HepG2 (cell line): ENCODE measurements at regions of chr18 and their contacts with region 1.

Region 1: DNA sequence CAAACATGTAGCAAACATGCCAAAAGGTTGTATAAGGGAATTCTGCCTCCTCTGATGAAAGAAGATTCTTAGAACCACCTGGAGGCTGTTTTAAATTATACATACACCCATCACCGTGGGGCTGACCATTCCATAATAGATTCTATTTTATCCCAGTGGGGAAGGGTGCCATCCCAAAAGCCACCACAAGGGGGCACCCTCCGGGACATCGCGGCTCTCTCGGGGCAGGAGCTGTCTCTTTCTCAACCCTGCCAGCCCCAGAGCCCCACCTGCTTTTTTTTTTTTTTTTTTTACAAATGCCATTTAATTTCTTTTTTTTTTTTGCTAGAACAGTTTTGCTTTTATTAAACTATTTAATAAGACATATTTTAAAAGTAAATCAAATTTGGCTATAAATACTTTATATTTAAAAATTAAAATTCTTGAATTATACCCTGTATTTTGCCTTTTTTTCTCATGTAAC is 8.6 kb upstream of the MTCL1 start:
- DNase-seq: peak; percentile 24
- ATAC-seq: peak; percentile 81
- H3K4me3 ChIP-seq: no peak overlapping the region
- H3K27ac ChIP-seq: no peak overlapping the region
- H3K4me1 ChIP-seq: peaks cover 5% of the 10 kb centered on the region; the same call in 1 of the 2 replicates
- H3K27me3 ChIP-seq: peaks cover 0 to 7% of the 10 kb centered on the region in 2 experiments; a peak in 2 of 5 replicates
- CTCF ChIP-seq: peak; percentile 73
- EP300 ChIP-seq: no peak
- POLR2A ChIP-seq: no peak
- RAD21 ChIP-seq: peak; percentile 45; the same call in 1 of the 2 replicates

Region 2: DNA sequence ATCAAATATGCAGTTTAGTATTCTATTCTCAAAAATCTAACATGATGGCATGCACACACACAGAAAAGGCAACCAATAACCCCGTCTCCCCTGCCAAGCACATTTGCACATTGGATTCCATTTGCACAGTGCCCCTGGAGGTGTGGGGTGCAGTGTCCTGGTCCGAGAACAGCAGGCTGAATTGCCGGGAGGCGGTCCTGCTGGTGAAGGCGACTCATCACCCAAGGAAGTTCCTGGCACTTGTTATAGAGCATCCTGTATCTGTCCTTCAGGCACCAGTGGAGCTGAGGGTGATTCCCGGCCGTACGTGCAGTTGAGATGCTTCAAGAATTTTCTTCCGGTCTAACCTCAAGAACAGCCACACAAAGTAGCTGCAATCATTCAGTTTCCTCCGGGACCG is 160.6 kb before region 1 on chr18:
- CTCF ChIA-PET with region 1: no interaction called
- POLR2A ChIA-PET with region 1: no interaction called
- in situ Hi-C with region 1: no loop called
- intact Hi-C with region 1: no loop called
- DNase-seq: no peak
- ATAC-seq: peak; percentile 36; the same call in 1 of the 3 replicates
- H3K4me3 ChIP-seq: no peak overlapping the region
- H3K27ac ChIP-seq: no peak overlapping the region
- H3K4me1 ChIP-seq: no peaks in the 10 kb centered on the region
- H3K27me3 ChIP-seq: no peaks in the 10 kb centered on the region; a peak in 1 of 5 replicates
- CTCF ChIP-seq: no peak
- EP300 ChIP-seq: no peak
- POLR2A ChIP-seq: no peak
- RAD21 ChIP-seq: no peak

Region 3: GRCh38 chr18:8882632-8883408 is 186.0 kb after region 1 on chr18:
- CTCF ChIA-PET with region 1: no interaction called
- POLR2A ChIA-PET with region 1: no interaction called
- in situ Hi-C with region 1: no loop called
- intact Hi-C with region 1: loop called (anchors 5 kb)
- DNase-seq: peak; percentile 21
- ATAC-seq: peak; percentile 75
- H3K4me3 ChIP-seq: no peak overlapping the region
- H3K27ac ChIP-seq: no peak overlapping the region
- H3K4me1 ChIP-seq: no peaks in the 10 kb centered on the region
- H3K27me3 ChIP-seq: no peaks in the 10 kb centered on the region; a peak in 1 of 5 replicates
- CTCF ChIP-seq: peak; percentile 72
- EP300 ChIP-seq: no peak
- POLR2A ChIP-seq: no peak
- RAD21 ChIP-seq: no peak

Region 4: DNA sequence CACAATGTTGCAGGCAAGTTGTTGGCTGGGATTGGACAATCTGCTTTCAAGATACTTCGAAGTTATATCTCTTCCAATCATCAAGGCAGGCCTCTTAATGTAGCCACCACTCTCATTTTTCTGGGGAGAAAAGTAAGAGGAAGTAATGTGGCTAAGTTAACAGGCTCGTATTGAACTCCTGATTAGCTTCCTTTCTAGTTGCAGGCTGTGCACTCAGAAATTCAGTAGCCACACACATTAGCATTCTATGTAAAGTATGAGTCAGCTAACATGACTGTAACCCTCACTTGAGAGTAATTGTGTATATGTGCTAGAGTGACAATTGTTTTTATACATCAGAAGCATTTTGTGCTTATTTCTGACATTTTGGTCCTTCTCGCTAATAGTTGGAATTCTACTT is 641.1 kb after region 1 on chr18:
- CTCF ChIA-PET with region 1: no interaction called
- POLR2A ChIA-PET with region 1: no interaction called
- in situ Hi-C with region 1: no loop called
- intact Hi-C with region 1: no loop called
- DNase-seq: no peak
- ATAC-seq: no peak
- H3K4me3 ChIP-seq: no peak overlapping the region
- H3K27ac ChIP-seq: no peak overlapping the region
- H3K4me1 ChIP-seq: peaks cover 22% of the 10 kb centered on the region
- H3K27me3 ChIP-seq: peaks cover 0 to 3% of the 10 kb centered on the region in 2 experiments; a peak in 2 of 5 replicates
- CTCF ChIP-seq: no peak
- EP300 ChIP-seq: no peak
- POLR2A ChIP-seq: no peak
- RAD21 ChIP-seq: no peak